Calu3 (cell line): ENCODE measurements at regions of chr6 and their contacts with region 1.

Region 1: GRCh38 chr6:25218346-25218745 is 60.8 kb upstream of the CARMIL1 start:
- DNase-seq: no peak
- H3K4me3 Mint-ChIP-seq: no peak overlapping the region
- H3K27ac Mint-ChIP-seq: no peak overlapping the region
- H3K4me1 Mint-ChIP-seq: peaks cover 3% of the 10 kb centered on the region
- H3K27me3 Mint-ChIP-seq: no peaks in the 10 kb centered on the region
- CTCF ChIP-seq: no peak

Region 2: GRCh38 chr6:24614043-24614420 is 604.3 kb before region 1 on chr6:
- CTCF ChIA-PET with region 1: no interaction called
- intact Hi-C with region 1: no loop called
- DNase-seq: no peak
- H3K4me3 Mint-ChIP-seq: no peak overlapping the region
- H3K27ac Mint-ChIP-seq: no peak overlapping the region
- H3K4me1 Mint-ChIP-seq: no peaks in the 10 kb centered on the region
- H3K27me3 Mint-ChIP-seq: no peaks in the 10 kb centered on the region
- CTCF ChIP-seq: no peak

Region 3: GRCh38 chr6:25458485-25458884 is 240.1 kb after region 1 on chr6:
- CTCF ChIA-PET with region 1: interaction called, 11 read pairs
- intact Hi-C with region 1: no loop called
- DNase-seq: peak; percentile 70
- H3K4me3 Mint-ChIP-seq: no peak overlapping the region
- H3K27ac Mint-ChIP-seq: peak overlapping the region; percentile 42
- H3K4me1 Mint-ChIP-seq: peaks cover 43% of the 10 kb centered on the region
- H3K27me3 Mint-ChIP-seq: no peaks in the 10 kb centered on the region
- CTCF ChIP-seq: no peak